Activated naive CD8-positive, alpha-beta T cell treated with anti-CD3 and anti-CD28 coated beads, Interleukin-2, amount 10 ng/mL, durations not matched to agents 7 days and 5 days (primary cell): ENCODE measurements at regions of chr18 and their contacts with region 1.

Region 1: DNA sequence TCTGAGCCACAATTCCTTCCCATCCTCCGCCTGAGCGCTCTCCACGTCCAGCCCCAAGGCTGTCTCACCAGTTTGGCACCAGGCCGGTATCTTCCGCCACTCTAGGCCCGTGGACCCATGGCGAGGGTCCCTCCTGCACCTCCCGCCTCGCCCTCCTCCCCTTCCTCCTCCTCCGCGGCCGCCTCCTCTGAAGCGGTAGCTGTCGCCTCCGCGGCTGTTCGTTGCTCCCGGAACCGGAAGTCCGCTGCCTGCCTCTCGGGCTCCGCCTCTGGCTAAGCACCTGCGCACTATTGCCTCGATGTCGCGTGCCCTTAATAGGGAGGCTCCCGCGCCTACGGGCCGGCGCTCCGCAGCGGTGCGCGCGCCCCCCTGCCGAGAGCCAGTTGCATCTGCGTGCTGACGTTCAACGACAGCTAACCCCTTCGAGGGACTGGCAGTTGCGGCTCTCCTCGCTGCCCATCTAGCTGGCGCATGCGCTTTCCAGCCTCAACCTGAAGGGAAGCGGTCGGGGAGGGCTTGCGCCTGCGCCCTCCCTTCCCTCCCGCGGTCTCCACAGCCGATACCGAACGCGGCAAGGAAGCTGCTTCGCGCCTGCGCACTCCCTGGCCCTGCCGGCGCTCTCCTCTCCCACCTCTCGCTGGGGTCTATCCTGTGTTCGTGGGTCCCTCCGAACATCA is at the start of gene MBD1:
- DNase-seq: peak; percentile 93
- ATAC-seq: peak; percentile 91
- H3K4me3 Mint-ChIP-seq: peak within 1 kb of the TSS; percentile 84
- H3K27ac Mint-ChIP-seq: peak within 1 kb of the TSS; percentile 97
- H3K4me1 Mint-ChIP-seq: peaks cover 34% of the 10 kb centered on the region
- H3K27me3 Mint-ChIP-seq: no peaks in the 10 kb centered on the region
- total RNA-seq, gene MBD1: 108 to 123 TPM

Region 2: GRCh38 chr18:50138181-50139064 is 143.0 kb before region 1 on chr18:
- POLR2A ChIA-PET with region 1: no interaction called
- DNase-seq: no peak
- ATAC-seq: no peak
- H3K4me3 Mint-ChIP-seq: no peak overlapping the region
- H3K27ac Mint-ChIP-seq: no peak overlapping the region
- H3K4me1 Mint-ChIP-seq: no peaks in the 10 kb centered on the region
- H3K27me3 Mint-ChIP-seq: peaks cover 3% of the 10 kb centered on the region

Region 3: GRCh38 chr18:50268022-50268747 is 13.2 kb before region 1 on chr18:
- POLR2A ChIA-PET with region 1: interaction called, 17 read pairs
- DNase-seq: peak; percentile 87
- ATAC-seq: peak; percentile 82
- H3K4me3 Mint-ChIP-seq: peak overlapping the region; percentile 77
- H3K27ac Mint-ChIP-seq: peak overlapping the region; percentile 31
- H3K4me1 Mint-ChIP-seq: peaks cover 11% of the 10 kb centered on the region
- H3K27me3 Mint-ChIP-seq: peaks cover 4% of the 10 kb centered on the region

Region 4: GRCh38 chr18:50307738-50308470 is 26.5 kb after region 1 on chr18:
- POLR2A ChIA-PET with region 1: interaction called, 14 read pairs
- DNase-seq: peak; percentile 81
- ATAC-seq: peak; percentile 100
- H3K4me3 Mint-ChIP-seq: peak overlapping the region; percentile 95
- H3K27ac Mint-ChIP-seq: peak overlapping the region; percentile 75
- H3K4me1 Mint-ChIP-seq: peaks cover 15% of the 10 kb centered on the region
- H3K27me3 Mint-ChIP-seq: peaks cover 30% of the 10 kb centered on the region

Region 5: GRCh38 chr18:50356036-50356945 is 74.9 kb after region 1 on chr18:
- POLR2A ChIA-PET with region 1: interaction called, 10 read pairs
- DNase-seq: no peak
- ATAC-seq: no peak
- H3K4me3 Mint-ChIP-seq: peak overlapping the region; percentile 5
- H3K27ac Mint-ChIP-seq: no peak overlapping the region
- H3K4me1 Mint-ChIP-seq: peaks cover 7% of the 10 kb centered on the region
- H3K27me3 Mint-ChIP-seq: peaks cover 13% of the 10 kb centered on the region